ENCODE measurements at regions of chr12 and their contacts with region 1.

Region 1: DNA sequence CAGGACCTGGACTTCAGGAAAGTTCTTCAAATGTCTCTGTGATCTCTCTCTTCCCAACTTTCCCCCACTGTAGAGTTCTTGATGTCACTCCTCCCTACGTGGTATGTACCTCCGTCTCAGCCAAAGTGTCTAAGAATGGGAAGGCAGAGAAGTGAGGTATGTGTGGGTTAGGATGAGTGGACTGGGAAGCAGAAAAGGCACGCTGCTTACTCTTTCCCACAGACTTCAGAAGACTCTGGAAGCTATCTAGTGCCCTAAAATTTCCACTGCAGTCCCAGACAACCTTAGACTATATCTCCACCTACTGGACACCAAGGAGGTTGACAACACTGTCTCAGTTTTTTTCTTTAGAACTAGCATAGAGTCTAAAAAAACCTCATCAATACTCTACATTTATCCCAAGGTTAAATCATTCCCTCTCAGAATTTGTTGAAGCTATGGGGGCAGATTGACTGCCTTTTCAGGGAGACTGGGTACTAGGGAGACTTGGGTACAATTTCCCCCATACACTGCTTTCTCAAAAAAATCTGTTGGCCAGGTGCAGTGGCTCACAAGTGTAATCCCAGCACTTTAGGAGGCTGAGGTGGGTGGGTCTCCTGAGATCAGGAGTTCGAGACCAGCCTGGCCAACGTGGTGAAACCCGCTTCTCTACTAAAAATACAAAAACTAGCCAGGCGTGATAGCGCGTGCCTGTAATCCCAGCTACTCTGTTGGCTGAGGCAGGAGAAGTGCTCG is 20.6 kb upstream of the ITGA5 start:
- DNase-seq: no peak
- ATAC-seq: peak; percentile 86 to 91
- H3K4me3 ChIP-seq: no peak overlapping the region
- H3K27ac ChIP-seq: peak overlapping the region; percentile 64
- H3K4me1 ChIP-seq: peaks cover 5% of the 10 kb centered on the region
- H3K27me3 ChIP-seq: no peaks in the 10 kb centered on the region

Region 2: GRCh38 chr12:53441040-53441833 is 998.5 kb before region 1 on chr12 and contains the start of gene PRR13:
- intact Hi-C with region 1: no loop called
- DNase-seq: peak; percentile 98 to 100 (median 99)
- ATAC-seq: peak; percentile 99
- H3K4me3 ChIP-seq: peak within 1 kb of the TSS; percentile 97
- H3K27ac ChIP-seq: peak within 1 kb of the TSS; percentile 96
- H3K4me1 ChIP-seq: peaks cover 4% of the 10 kb centered on the region
- H3K27me3 ChIP-seq: no peaks in the 10 kb centered on the region
- total RNA-seq, gene PRR13: 66.9 to 85.6 (median 82.6) TPM

Region 3: DNA sequence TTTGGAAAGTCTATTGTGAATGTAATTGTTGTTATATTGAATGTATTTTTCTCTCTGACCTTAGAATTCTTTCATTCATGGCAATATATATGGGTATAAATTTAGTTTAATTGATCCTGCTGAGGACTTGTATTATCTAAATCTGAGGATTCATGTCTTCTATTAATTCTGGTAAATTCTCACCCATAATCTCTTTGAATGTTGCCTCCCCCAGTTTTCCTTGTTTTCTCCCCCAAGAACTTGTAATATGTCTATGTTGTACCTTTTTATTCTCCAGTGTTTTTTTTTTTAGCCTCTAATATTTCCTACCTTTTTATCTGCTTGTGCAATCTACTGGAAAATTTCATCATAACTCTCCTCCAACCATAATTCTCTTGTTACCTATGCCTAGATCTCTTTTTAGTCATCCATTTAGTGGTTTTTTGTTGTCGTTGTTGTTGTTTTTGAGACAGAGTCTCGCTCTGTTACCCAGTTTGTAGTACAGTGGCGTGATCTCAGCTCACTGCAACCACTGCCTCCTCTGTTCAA is 522.5 kb before region 1 on chr12:
- intact Hi-C with region 1: no loop called
- DNase-seq: no peak
- ATAC-seq: no peak
- H3K4me3 ChIP-seq: no peak overlapping the region
- H3K27ac ChIP-seq: no peak overlapping the region
- H3K4me1 ChIP-seq: no peaks in the 10 kb centered on the region
- H3K27me3 ChIP-seq: peaks cover 17% of the 10 kb centered on the region

Region 4: DNA sequence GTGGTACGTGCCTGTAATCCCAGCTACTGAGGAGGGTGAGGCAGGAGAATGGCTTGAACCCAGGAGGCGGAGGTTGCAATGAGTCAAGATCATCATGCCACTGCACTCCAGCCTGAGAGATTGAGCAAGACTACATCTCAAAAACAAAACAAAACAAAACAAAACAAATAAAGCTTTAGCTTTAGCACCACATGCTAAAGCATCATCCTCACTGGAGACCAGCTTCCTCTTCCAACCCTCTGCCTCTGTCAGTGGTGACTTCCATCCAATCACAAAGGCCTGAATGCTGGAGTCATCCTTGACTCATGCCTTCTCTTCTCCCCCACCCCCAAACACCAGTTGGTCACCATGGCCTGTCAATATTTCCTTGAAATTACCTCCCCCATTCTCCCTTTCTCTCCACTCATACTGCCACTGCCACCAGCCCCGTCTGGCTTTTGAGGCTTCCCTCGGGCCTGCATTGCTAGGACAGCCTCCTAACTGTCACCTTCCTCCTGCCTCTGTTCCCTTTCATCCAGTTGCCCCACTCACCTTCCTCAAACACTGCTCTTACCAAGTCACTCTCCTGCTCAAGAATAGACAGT is 56.6 kb before region 1 on chr12:
- intact Hi-C with region 1: no loop called
- DNase-seq: no peak
- ATAC-seq: no peak
- H3K4me3 ChIP-seq: no peak overlapping the region
- H3K27ac ChIP-seq: no peak overlapping the region
- H3K4me1 ChIP-seq: no peaks in the 10 kb centered on the region
- H3K27me3 ChIP-seq: no peaks in the 10 kb centered on the region

Region 5: DNA sequence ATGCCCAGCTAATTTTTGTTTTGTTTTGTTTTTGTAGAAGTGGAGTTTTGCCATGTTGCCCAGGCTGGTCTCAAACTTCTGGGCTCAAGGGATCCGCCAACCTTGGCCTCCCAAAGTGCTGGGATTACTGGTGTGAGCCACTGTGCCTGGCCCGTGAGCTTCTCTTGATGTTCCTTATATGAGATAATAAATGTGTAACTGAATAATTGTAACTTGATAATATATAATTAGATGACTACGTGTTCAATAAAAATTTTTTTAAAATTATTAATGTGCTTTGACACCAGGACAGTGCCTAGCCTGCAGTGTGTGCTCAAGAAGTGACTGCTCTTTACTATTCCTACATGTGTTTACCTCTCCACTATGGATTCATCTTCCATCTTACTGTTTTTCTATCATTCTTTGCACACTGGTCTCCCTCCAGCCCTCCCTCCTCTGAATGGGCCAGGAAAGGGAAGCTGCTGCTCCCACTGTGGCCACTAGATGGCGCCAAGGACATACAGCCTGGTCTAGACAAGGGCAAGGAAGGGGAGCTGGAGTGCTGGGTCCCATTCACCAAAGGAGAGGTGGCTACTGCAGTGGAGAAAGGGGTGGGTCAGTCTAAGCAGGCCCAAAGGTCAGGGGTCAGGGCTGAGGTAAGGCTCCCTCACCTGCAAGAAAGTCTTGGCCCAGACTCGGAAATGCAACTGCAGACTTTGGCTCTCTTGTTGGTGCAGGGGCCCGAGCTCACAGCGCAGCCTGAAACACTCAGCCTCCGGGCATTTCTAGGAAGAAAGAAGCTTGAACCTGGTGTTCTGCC is 40.5 kb before region 1 on chr12:
- intact Hi-C with region 1: loop called (anchors 1 to 5 kb)
- DNase-seq: peak; percentile 82 to 95 (median 94)
- ATAC-seq: peak; percentile 76 to 77
- H3K4me3 ChIP-seq: no peak overlapping the region
- H3K27ac ChIP-seq: no peak overlapping the region
- H3K4me1 ChIP-seq: no peaks in the 10 kb centered on the region
- H3K27me3 ChIP-seq: no peaks in the 10 kb centered on the region

Region 6: GRCh38 chr12:54404061-54405004 is 35.4 kb before region 1 on chr12:
- intact Hi-C with region 1: loop called (anchors 1 to 5 kb)
- DNase-seq: peak in 1 of 3 donors; percentile 51
- ATAC-seq: no peak
- H3K4me3 ChIP-seq: no peak overlapping the region
- H3K27ac ChIP-seq: no peak overlapping the region
- H3K4me1 ChIP-seq: peaks cover 8% of the 10 kb centered on the region
- H3K27me3 ChIP-seq: no peaks in the 10 kb centered on the region

Measured in right cardiac atrium (tissue), 5 donors.